A673 (cell line): ENCODE measurements at regions of chr11 and their contacts with region 1.

Region 1: GRCh38 chr11:83162377-83162776 is 5.4 kb downstream of the PCF11 start:
- DNase-seq: no peak
- H3K4me3 ChIP-seq: no peak overlapping the region
- H3K27ac ChIP-seq: no peak overlapping the region
- H3K4me1 ChIP-seq: peaks cover 17% of the 10 kb centered on the region
- H3K27me3 ChIP-seq: no peaks in the 10 kb centered on the region
- CTCF ChIP-seq: no peak

Region 2: DNA sequence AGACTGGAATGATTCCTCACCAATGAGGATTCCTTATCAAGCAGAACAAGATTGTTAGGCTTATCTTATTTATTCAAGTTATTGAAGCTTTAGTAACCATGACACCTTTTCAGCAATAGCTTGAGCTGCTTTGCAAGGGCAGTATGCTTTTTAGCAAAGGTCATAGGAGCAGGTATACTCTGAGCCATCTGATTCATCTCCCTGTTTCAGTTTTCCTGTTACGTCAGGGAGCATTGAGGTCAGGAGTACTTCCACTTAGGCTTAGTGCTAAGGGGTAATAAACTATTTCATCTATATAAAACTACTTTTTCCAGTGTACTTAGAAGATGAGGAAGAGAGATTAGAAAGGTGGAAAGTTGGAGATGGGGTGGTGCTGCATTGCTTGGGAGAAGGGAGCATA is 13.4 kb after region 1 on chr11:
- CTCF ChIA-PET with region 1: interaction called, 10 read pairs
- POLR2A ChIA-PET with region 1: no interaction called
- intact Hi-C with region 1: no loop called
- DNase-seq: no peak
- H3K4me3 ChIP-seq: no peak overlapping the region
- H3K27ac ChIP-seq: no peak overlapping the region
- H3K4me1 ChIP-seq: peaks cover 8% of the 10 kb centered on the region
- H3K27me3 ChIP-seq: no peaks in the 10 kb centered on the region
- CTCF ChIP-seq: no peak

Region 3: DNA sequence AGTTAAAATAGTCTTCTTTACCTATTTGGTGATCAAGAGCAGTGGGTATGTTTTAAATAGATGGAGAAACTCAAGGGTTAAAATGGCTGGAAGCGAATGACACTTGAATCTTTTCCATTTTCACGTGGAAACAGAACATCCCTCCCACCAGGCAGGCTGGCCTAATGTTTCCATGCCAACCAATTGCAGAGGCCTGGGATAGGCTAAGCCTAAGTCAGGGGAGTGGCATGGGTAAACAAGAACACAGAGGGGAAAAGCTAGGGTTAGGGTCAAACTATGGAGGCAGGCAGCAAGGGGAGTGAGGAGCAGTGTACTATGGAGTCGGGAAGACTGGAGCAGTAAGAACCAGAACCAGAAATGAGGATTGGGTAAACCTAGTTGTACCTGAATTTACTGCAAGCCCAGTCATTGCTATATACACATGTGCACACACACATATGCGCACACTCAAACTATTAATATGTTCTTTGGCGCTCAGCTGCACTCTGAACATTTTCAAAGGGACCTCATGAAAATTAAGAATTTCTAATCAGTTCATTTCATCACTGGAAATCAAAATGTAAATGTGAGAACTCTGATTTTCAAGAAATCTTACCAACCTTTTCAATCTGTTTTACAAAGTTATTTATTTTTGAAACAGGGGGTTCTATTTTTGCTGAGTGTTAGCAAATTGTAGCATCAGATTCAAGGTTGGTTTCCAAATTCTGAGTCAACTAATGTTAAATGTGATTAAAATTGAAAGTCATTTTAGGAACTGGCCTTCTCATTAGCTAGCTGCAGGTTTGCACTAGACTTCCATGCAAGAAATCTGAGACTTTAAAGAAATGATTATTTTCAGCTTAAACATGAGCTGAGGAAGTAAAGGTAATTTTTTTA is 450.8 kb after region 1 on chr11:
- CTCF ChIA-PET with region 1: no interaction called
- POLR2A ChIA-PET with region 1: interaction called, 13 read pairs
- intact Hi-C with region 1: no loop called
- DNase-seq: peak; percentile 72
- H3K4me3 ChIP-seq: no peak overlapping the region
- H3K27ac ChIP-seq: peak overlapping the region; percentile 28
- H3K4me1 ChIP-seq: peaks cover 62% of the 10 kb centered on the region
- H3K27me3 ChIP-seq: no peaks in the 10 kb centered on the region
- CTCF ChIP-seq: no peak